ENCODE measurements at regions of chr3 and their contacts with region 1.

Region 1: DNA sequence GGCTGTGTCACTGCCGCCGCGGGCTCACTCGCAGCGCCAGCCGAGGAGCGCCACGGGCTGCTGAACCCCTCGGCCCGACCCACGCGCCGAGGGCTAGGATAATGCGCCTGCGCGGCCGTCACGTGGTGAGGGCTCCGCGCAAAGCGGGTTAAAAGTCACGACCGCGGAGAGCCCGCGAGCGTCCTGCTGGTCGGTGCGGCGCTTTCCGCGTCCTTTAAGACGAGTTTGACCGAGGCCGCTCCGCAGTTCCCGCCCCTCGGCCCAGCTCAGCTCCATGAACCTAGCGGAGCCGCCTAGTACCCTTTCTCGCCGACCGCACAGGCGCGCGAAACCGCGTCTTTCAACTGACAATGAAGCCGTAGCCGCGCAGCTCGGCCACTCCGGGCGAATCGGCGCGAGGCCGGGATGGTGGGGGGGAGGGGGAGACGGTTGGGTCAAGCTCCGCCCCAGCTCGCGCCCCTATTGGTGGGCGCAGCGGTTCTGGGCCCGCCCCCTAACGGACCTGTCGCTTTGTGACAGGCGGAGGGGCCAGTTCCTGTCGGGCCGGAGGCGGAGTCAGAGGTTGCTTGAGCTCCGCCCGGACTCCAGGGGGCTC is 636 bp upstream of the STT3B start:
- DNase-seq: peak; percentile 96 to 99
- H3K4me3 ChIP-seq: peak overlapping the region; percentile 76 to 80
- H3K27ac ChIP-seq: peak overlapping the region; percentile 97 to 98
- H3K4me1 ChIP-seq: peaks cover 2 to 13% of the 10 kb centered on the region in 2 donors
- H3K27me3 ChIP-seq: no peaks in the 10 kb centered on the region
- CTCF ChIP-seq: peak in 1 of 3 experiments; percentile 3

Region 2: GRCh38 chr3:30779686-30780287 is 752.3 kb before region 1 on chr3:
- intact Hi-C with region 1: loop called (anchors 10 kb)
- DNase-seq: no peak
- H3K4me3 ChIP-seq: no peak overlapping the region
- H3K27ac ChIP-seq: no peak overlapping the region
- H3K4me1 ChIP-seq: no peaks in the 10 kb centered on the region
- H3K27me3 ChIP-seq: no peaks in the 10 kb centered on the region
- CTCF ChIP-seq: peak in 2 of 3 experiments; percentile 32 to 48

Region 3: GRCh38 chr3:31166249-31166885 is 365.7 kb before region 1 on chr3:
- intact Hi-C with region 1: loop called (anchors 5 kb)
- DNase-seq: peak in 1 of 2 donors; percentile 79
- H3K4me3 ChIP-seq: peak overlapping the region in 1 of 2 donors; percentile 43
- H3K27ac ChIP-seq: peak overlapping the region; percentile 53 to 66
- H3K4me1 ChIP-seq: peaks cover 2 to 23% of the 10 kb centered on the region in 2 donors
- H3K27me3 ChIP-seq: no peaks in the 10 kb centered on the region
- CTCF ChIP-seq: no peak

Region 4: GRCh38 chr3:31423482-31423881 is 108.6 kb before region 1 on chr3:
- intact Hi-C with region 1: no loop called
- DNase-seq: no peak
- H3K4me3 ChIP-seq: no peak overlapping the region
- H3K27ac ChIP-seq: no peak overlapping the region
- H3K4me1 ChIP-seq: no peaks in the 10 kb centered on the region
- H3K27me3 ChIP-seq: no peaks in the 10 kb centered on the region
- CTCF ChIP-seq: no peak

Region 5: DNA sequence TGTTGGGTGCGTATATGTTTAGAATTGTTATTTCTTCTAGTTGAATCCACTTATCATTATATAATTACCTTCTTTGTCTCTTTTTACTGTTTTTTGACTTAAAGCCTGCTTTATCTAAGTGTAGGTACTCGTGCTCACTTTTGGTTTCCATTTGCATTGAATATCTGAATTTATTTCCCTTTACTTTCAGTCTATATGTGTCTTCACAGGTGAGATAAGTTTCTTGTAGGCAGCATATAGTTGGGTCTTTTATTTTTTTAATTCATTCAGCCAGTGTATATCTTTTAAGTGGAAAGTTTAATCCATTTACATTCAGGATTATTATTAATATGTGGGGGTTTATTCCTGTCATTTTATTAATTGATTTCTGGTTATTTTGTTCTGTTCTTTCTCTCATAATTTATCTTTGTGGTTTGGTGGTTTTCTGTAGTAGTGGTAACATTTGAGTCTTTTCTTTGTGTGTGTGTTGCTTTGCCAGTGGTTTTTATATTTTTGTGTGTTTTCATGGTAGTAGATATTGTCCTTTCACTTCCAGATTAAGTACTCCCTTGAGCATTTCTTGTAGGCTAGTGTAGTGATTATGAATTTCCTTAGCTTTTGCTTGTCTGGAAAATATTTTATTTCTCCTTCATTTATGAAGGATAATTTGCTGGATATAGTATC is 27.9 kb after region 1 on chr3:
- intact Hi-C with region 1: no loop called
- DNase-seq: no peak
- H3K4me3 ChIP-seq: no peak overlapping the region
- H3K27ac ChIP-seq: no peak overlapping the region
- H3K4me1 ChIP-seq: peaks cover 0 to 5% of the 10 kb centered on the region in 2 donors
- H3K27me3 ChIP-seq: no peaks in the 10 kb centered on the region
- CTCF ChIP-seq: no peak

Region 6: DNA sequence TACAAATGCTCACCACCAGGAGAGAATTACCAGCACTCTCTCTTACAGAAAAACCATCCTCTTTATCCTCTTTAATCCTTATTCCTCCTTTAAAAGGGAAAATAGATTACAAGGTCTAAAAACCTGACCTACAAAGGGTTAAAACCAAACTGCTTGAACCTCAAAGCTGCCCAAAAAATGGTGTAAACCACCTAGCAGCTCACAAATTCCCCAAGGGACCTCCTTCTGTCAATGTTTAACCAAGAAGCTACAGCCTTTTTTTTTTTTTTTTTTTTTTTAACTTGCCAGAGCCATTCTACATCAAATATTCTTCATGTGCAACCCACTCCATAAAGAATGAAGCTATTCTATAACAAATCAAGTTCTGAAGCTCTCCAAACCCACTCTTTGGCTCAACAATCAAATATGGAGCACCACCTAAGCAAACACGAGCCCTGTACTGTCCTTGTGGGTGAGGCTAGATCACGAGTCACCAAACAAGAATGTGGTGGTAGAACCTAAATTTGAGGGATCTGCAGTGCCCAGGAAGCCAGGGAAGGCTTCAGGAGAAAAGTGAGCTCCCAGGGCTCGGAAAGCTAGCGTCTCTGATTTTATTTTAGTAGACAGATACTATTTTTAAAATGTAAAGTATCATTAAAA is 428.8 kb after region 1 on chr3:
- intact Hi-C with region 1: loop called (anchors 5 kb)
- DNase-seq: no peak
- H3K4me3 ChIP-seq: peak overlapping the region in 1 of 2 donors; percentile 42
- H3K27ac ChIP-seq: peak overlapping the region; percentile 70 to 89
- H3K4me1 ChIP-seq: peaks cover 6 to 19% of the 10 kb centered on the region in 2 donors
- H3K27me3 ChIP-seq: no peaks in the 10 kb centered on the region
- CTCF ChIP-seq: no peak

Region 7: GRCh38 chr3:33440323-33441232 is 1908.5 kb after region 1 on chr3 and contains the start of gene UBP1:
- intact Hi-C with region 1: loop called (anchors 10 kb)
- DNase-seq: peak; percentile 99 to 100
- H3K4me3 ChIP-seq: peak within 1 kb of the TSS; percentile 94 to 96
- H3K27ac ChIP-seq: peak within 1 kb of the TSS; percentile 97
- H3K4me1 ChIP-seq: peaks cover 8 to 18% of the 10 kb centered on the region in 2 donors
- H3K27me3 ChIP-seq: no peaks in the 10 kb centered on the region
- CTCF ChIP-seq: no peak
- total RNA-seq, gene UBP1: 55.8 TPM

Measured in ascending aorta (tissue), 2 donors.